SK-N-SH (cell line): ENCODE measurements at regions of chr1 and their contacts with region 1.

Region 1: GRCh38 chr1:24391882-24392603 is 21.5 kb downstream of the STPG1 start:
- DNase-seq: peak; percentile 72
- H3K4me3 ChIP-seq: no peak overlapping the region; a peak in 1 of 4 replicates
- H3K27ac ChIP-seq: peak overlapping the region in 1 of 2 experiments; percentile 37; a peak in 1 of 4 replicates
- H3K4me1 ChIP-seq: peaks cover 0 to 15% of the 10 kb centered on the region in 2 experiments; a peak in 3 of 4 replicates
- H3K27me3 ChIP-seq: no peaks in the 10 kb centered on the region
- CTCF ChIP-seq: peak; percentile 74
- EP300 ChIP-seq: no peak
- RAD21 ChIP-seq: peak; percentile 89

Region 2: GRCh38 chr1:24070821-24071393 is 321.1 kb before region 1 on chr1:
- CTCF ChIA-PET with region 1: interaction called, 44 read pairs
- POLR2A ChIA-PET with region 1: no interaction called
- DNase-seq: peak; percentile 90
- H3K4me3 ChIP-seq: no peak overlapping the region; a peak in 1 of 4 replicates
- H3K27ac ChIP-seq: no peak overlapping the region
- H3K4me1 ChIP-seq: peaks cover 0 to 3% of the 10 kb centered on the region in 2 experiments; a peak in 1 of 4 replicates
- H3K27me3 ChIP-seq: no peaks in the 10 kb centered on the region
- CTCF ChIP-seq: peak; percentile 87
- EP300 ChIP-seq: no peak
- RAD21 ChIP-seq: peak; percentile 91

Region 3: GRCh38 chr1:24186993-24187805 is 204.8 kb before region 1 on chr1 and contains the start of gene IFNLR1:
- CTCF ChIA-PET with region 1: interaction called, 451 read pairs
- POLR2A ChIA-PET with region 1: interaction called, 3 read pairs
- DNase-seq: peak; percentile 89
- H3K4me3 ChIP-seq: peak within 1 kb of the TSS; percentile 49 to 58
- H3K27ac ChIP-seq: no peak within 1 kb of the TSS
- H3K4me1 ChIP-seq: peaks cover 0 to 5% of the 10 kb centered on the region in 2 experiments; a peak in 1 of 4 replicates
- H3K27me3 ChIP-seq: peaks cover 4% of the 10 kb centered on the region; the same call in 1 of the 2 replicates
- CTCF ChIP-seq: no peak
- EP300 ChIP-seq: no peak
- RAD21 ChIP-seq: no peak
- polyA plus RNA-seq, gene IFNLR1: 0.29 and 0.30 TPM in 2 replicates

Region 4: DNA sequence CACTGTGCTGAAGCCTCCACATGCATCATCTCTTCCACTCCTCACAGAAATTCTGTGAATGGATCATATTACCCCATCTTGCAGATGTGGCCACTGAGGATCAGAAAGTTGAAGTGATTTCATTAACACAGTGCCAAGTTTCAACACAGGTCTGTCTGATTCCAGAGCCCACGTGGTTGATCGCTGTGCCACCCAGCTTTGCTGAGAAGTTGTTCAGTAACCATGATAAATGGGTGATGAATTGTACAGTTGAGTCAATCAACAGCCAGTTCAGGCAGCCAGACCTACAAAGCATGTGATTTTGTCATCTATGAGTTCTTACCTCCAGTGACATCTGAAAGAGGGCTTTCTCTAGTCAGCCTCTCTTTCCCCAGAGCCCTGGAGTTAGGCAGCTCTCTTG is 134.7 kb before region 1 on chr1:
- CTCF ChIA-PET with region 1: interaction called, 17 read pairs
- POLR2A ChIA-PET with region 1: no interaction called
- DNase-seq: no peak
- H3K4me3 ChIP-seq: no peak overlapping the region
- H3K27ac ChIP-seq: no peak overlapping the region
- H3K4me1 ChIP-seq: no peaks in the 10 kb centered on the region
- H3K27me3 ChIP-seq: peaks cover 4% of the 10 kb centered on the region
- CTCF ChIP-seq: no peak
- EP300 ChIP-seq: no peak
- RAD21 ChIP-seq: no peak

Region 5: GRCh38 chr1:24329797-24330543 is 62.1 kb before region 1 on chr1:
- CTCF ChIA-PET with region 1: interaction called, 10 read pairs
- POLR2A ChIA-PET with region 1: no interaction called
- DNase-seq: no peak
- H3K4me3 ChIP-seq: no peak overlapping the region
- H3K27ac ChIP-seq: no peak overlapping the region
- H3K4me1 ChIP-seq: no peaks in the 10 kb centered on the region; a peak in 1 of 4 replicates
- H3K27me3 ChIP-seq: no peaks in the 10 kb centered on the region; the same call in 1 of the 2 replicates
- CTCF ChIP-seq: no peak
- EP300 ChIP-seq: no peak
- RAD21 ChIP-seq: no peak

Region 6: DNA sequence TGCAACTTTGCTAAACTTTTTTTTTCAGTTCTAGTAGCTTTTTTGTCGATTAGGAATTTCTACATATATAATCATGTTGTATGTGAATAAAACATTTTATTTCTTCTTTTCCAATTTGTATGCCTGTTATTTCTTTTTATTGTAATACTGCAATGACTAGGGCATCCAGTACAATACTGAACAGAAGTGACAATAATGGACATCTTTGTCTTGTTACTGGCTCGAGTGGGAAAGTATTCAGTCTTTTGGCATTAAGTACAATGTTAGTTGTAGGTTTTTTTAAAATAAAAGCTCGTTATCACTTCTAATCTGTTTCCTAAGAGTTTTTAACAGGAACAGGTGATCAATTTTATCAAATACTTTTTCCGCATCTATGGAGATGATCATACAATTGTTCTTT is 11.8 kb after region 1 on chr1:
- CTCF ChIA-PET with region 1: interaction called, 69 read pairs
- POLR2A ChIA-PET with region 1: no interaction called
- DNase-seq: no peak
- H3K4me3 ChIP-seq: no peak overlapping the region
- H3K27ac ChIP-seq: no peak overlapping the region
- H3K4me1 ChIP-seq: no peaks in the 10 kb centered on the region
- H3K27me3 ChIP-seq: no peaks in the 10 kb centered on the region
- CTCF ChIP-seq: no peak
- EP300 ChIP-seq: no peak
- RAD21 ChIP-seq: no peak

Region 7: DNA sequence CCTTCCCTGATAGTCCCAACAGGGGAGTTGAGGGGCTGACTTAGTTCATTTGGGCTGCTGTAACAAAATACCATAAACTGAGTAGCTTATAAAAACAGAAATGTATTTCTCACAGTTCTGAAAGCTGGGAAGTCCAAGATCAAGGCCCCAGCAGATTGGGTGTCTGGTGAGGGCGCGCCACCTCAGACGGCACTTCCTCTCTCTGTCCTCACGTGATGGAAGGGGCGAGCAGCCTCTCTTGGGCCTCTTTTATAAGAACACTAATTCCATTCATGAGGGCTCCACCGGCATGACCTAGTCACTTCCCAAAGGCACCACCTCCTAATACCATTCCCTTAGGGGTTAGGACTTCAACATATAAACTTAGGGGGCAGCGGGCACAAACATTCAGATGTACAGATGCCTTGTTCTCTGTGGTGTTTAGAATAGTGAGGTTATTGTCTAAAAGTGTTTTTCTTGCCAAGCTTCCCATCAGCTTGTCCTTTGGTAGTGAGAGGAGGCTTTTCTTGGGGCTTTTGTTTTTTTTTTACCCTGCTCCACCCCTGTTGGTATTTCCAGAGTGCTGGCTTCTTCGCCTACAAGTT is 43.8 kb after region 1 on chr1:
- CTCF ChIA-PET with region 1: no interaction called
- POLR2A ChIA-PET with region 1: no interaction called
- DNase-seq: no peak
- H3K4me3 ChIP-seq: no peak overlapping the region
- H3K27ac ChIP-seq: no peak overlapping the region
- H3K4me1 ChIP-seq: peaks cover 0 to 14% of the 10 kb centered on the region in 2 experiments; a peak in 1 of 4 replicates
- H3K27me3 ChIP-seq: no peaks in the 10 kb centered on the region
- CTCF ChIP-seq: no peak
- EP300 ChIP-seq: no peak
- RAD21 ChIP-seq: no peak